ENCODE measurements at regions of chr1 and their contacts with region 1.

Region 1: GRCh38 chr1:165928075-165928731 is 100.8 kb downstream of the UCK2 start:
- DNase-seq: peak; percentile 10
- H3K4me3 ChIP-seq: no peak overlapping the region
- H3K27ac ChIP-seq: no peak overlapping the region
- H3K27me3 ChIP-seq: no peaks in the 10 kb centered on the region
- CTCF ChIP-seq: peak; percentile 73

Region 2: DNA sequence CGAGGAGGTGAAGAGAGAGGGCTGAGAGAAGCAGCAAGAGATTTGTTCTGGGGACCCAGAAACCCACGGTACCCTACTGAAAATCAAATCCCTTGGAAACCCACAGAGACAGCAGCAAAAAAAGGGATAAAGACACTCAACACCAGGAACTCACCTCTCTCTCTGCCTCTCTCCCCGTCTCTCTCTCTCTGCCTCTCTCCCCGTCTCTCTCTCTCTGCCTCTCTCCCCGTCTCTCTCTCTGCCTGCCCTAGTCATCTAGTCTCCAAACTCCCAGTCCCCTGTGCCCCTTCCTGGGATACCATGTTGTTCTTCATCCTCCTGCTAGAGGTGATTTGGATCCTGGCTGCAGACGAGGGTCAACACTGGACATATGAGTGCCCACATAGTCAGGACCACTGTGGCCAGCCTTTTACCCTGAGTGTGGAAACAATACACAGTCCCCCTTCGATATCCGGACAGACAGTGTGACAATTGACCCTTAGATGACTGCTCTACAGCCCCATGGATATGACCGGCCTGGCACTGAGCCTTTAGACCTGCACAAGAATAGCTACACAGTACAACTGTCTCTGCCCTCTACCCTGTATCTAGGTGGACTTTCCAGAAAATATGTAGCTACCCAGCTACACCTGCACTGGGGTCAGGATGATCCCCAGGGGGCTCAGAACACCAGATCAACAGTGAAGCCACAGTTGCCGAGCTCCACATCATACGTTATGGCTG is 220.1 kb before region 1 on chr1:
- CTCF ChIA-PET with region 1: interaction called, 14 read pairs
- POLR2A ChIA-PET with region 1: interaction called, 3 read pairs
- DNase-seq: no peak
- H3K4me3 ChIP-seq: no peak overlapping the region
- H3K27ac ChIP-seq: no peak overlapping the region
- H3K27me3 ChIP-seq: peaks cover 4% of the 10 kb centered on the region
- CTCF ChIP-seq: no peak

Region 3: GRCh38 chr1:165768513-165769394 is 159.4 kb before region 1 on chr1 and contains the start of gene TMCO1:
- CTCF ChIA-PET with region 1: interaction called, 13 read pairs
- POLR2A ChIA-PET with region 1: interaction called, 6 read pairs
- DNase-seq: peak; percentile 97
- H3K4me3 ChIP-seq: peak within 1 kb of the TSS; percentile 88
- H3K27ac ChIP-seq: peak within 1 kb of the TSS; percentile 94
- H3K27me3 ChIP-seq: no peaks in the 10 kb centered on the region
- CTCF ChIP-seq: peak; percentile 36
- polyA plus RNA-seq, gene TMCO1: 188 and 200 TPM in 2 replicates

Region 4: DNA sequence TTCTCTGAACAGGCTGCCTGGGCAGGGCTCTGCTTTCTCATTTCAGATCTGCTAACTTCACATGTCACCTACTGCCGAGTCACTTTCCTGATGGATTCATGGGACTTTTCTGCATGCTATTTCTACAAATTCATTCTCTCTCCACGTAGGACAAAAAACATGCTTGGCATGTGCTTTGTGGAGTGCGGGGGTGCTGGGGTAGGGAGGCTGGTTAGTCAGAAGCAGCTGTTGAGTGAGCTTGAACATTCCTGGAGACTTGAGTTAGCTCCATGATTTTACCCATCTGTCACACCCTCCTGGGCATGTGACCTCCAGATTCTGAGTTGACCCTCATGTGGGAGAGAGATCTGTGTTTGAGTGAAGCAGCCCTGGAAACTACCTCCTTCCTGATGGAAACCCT is 29.4 kb before region 1 on chr1:
- CTCF ChIA-PET with region 1: interaction called, 11 read pairs
- POLR2A ChIA-PET with region 1: no interaction called
- DNase-seq: peak; percentile 98
- H3K4me3 ChIP-seq: no peak overlapping the region
- H3K27ac ChIP-seq: peak overlapping the region; percentile 100
- H3K27me3 ChIP-seq: no peaks in the 10 kb centered on the region
- CTCF ChIP-seq: 0 out of 2 replicates have a peak, but pooled peaks have one; percentile 1

Region 5: GRCh38 chr1:165965857-165966256 is 37.7 kb after region 1 on chr1:
- CTCF ChIA-PET with region 1: no interaction called
- POLR2A ChIA-PET with region 1: no interaction called
- DNase-seq: no peak
- H3K4me3 ChIP-seq: no peak overlapping the region
- H3K27ac ChIP-seq: no peak overlapping the region
- H3K27me3 ChIP-seq: no peaks in the 10 kb centered on the region
- CTCF ChIP-seq: no peak

Region 6: DNA sequence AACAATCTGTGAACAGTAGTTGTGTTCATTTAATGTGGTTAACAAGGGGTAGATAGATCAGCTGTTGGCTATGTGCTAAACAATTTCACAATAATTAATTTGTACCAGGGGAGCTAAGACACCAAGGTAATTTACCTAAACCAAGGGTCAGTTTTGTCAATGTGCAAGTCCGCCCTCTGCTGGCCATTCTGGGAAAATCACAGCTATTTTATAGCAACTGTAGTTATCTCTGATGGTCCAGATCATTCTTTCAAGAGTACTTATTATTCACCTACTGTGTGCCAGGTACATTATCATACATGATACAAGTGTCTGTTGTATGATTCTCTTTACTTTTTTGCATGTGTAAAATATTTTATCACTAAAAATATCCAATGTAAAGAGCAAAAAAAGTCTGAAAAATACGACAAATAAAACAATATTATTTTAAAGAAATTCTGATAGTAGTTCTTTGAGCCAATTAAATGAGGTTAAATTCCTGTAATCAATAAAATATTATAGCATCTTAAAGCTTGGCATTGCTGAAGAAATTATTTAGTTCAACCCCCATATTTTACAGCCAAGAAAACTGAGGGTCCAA is 550.9 kb after region 1 on chr1:
- CTCF ChIA-PET with region 1: interaction called, 95 read pairs
- POLR2A ChIA-PET with region 1: no interaction called
- DNase-seq: peak; percentile 6
- H3K4me3 ChIP-seq: no peak overlapping the region
- H3K27ac ChIP-seq: no peak overlapping the region
- H3K27me3 ChIP-seq: no peaks in the 10 kb centered on the region
- CTCF ChIP-seq: peak; percentile 75

Measured in AG04450 (cell line).